A673 (cell line): ENCODE measurements at regions of chr10 and their contacts with region 1.

Region 1: GRCh38 chr10:63738410-63738809 is 217.2 kb downstream of the REEP3 start:
- DNase-seq: no peak
- H3K4me3 ChIP-seq: no peak overlapping the region
- H3K27ac ChIP-seq: no peak overlapping the region
- H3K4me1 ChIP-seq: no peaks in the 10 kb centered on the region
- H3K27me3 ChIP-seq: no peaks in the 10 kb centered on the region
- CTCF ChIP-seq: no peak

Region 2: GRCh38 chr10:63614371-63614891 is 124.0 kb before region 1 on chr10:
- CTCF ChIA-PET with region 1: no interaction called
- POLR2A ChIA-PET with region 1: interaction called, 11 read pairs
- intact Hi-C with region 1: no loop called
- DNase-seq: peak; percentile 66
- H3K4me3 ChIP-seq: no peak overlapping the region
- H3K27ac ChIP-seq: peak overlapping the region; percentile 70
- H3K4me1 ChIP-seq: peaks cover 39% of the 10 kb centered on the region
- H3K27me3 ChIP-seq: no peaks in the 10 kb centered on the region
- CTCF ChIP-seq: no peak